Common myeloid progenitor, CD34-positive (primary cell): ENCODE measurements at regions of chr2 and their contacts with region 1.

Region 1: DNA sequence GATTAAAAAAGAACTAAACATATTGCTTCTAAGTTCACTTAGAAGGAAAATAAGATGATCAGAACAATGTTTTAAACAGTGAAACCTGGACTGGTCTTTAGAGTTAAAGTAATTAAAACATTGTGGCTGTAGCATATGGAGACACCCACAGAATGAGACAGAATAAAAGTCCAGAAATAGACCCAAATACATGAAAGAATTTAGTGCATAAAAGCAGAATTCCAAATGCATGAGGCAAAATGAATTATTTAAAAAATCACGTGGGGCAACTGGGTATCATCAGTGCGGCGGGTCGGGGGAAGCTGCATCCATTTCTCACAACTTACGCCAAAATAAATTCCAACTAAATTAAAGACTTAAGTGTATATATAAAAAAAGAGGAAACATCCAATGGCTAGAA is 12.1 kb downstream of the RNF149 start:
- DNase-seq: no peak
- H3K4me3 ChIP-seq: no peak overlapping the region
- H3K27ac ChIP-seq: no peak overlapping the region
- H3K4me1 ChIP-seq: peaks cover 0 to 6% (median under 1%) of the 10 kb centered on the region in 4 experiments
- H3K27me3 ChIP-seq: no peaks in the 10 kb centered on the region

Region 2: DNA sequence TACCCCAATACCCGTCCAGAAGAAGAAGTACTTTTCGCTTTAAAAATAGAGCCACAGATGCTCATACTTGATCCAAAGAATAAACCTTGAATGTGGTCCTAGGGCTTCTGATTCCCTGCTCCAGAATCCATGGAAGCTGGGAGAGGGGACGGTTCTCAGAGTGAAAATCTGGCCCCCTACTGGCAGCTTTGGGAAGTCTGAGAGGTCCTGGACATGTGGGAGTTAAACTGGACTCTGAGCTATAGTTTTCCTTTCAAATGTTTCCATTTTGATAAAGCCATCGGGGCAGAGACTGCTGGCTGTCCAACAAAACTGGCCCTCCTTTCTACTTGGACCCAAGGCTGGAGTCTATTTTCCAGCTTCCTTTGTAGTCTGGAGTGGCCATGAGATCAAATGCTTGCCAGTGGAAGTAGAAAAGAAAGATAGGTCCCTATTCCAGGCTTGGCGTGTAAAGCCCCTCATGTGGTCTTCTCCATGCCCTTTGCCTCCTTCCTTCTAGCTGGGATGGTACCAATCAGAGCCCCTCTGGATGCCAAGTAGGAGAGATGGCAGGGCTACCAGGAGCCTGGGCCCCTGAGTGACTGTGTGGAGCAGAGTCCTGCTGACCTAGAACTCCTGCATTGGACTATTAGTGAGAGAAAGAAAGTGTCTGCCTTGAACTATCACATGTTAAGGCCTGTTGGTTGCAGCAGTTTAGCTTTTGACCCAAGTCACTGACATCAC is 107.5 kb before region 1 on chr2:
- CTCF ChIA-PET with region 1: no interaction called
- POLR2A ChIA-PET with region 1: no interaction called
- DNase-seq: no peak
- H3K4me3 ChIP-seq: no peak overlapping the region
- H3K27ac ChIP-seq: no peak overlapping the region
- H3K4me1 ChIP-seq: peaks cover 0 to 6% (median 3%) of the 10 kb centered on the region in 4 experiments
- H3K27me3 ChIP-seq: no peaks in the 10 kb centered on the region

Region 3: DNA sequence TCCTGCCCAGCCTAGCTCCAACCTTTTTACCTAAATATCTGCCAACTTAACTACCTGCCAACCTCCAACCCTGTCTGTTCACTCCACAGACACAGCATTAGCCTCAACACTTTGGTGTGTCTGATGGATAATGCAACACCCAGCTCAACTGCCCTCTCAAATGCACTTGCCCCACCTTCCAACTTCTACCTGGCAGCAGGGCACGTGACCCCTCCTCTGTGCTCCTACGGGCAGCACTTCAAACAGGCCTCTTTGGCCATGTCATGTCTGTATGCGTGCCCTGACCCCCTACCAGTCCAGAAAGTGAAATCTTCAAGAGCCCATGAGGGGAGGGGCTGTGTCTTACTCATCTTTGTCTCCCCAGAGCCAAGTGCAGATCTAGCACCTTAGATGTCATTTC is 13.4 kb before region 1 on chr2:
- CTCF ChIA-PET with region 1: interaction called, 18 read pairs
- POLR2A ChIA-PET with region 1: no interaction called
- DNase-seq: no peak
- H3K4me3 ChIP-seq: no peak overlapping the region
- H3K27ac ChIP-seq: no peak overlapping the region
- H3K4me1 ChIP-seq: no peaks in the 10 kb centered on the region
- H3K27me3 ChIP-seq: no peaks in the 10 kb centered on the region

Region 4: GRCh38 chr2:101328474-101329007 is 32.2 kb after region 1 on chr2:
- CTCF ChIA-PET with region 1: no interaction called
- POLR2A ChIA-PET with region 1: no interaction called
- DNase-seq: peak; percentile 87 to 98 (median 96)
- H3K4me3 ChIP-seq: peak overlapping the region in 4 of 7 experiments; percentile 1 to 63 (median 36)
- H3K27ac ChIP-seq: peak overlapping the region; percentile 9 to 72
- H3K4me1 ChIP-seq: peaks cover 34 to 47% (median 37%) of the 10 kb centered on the region in 4 experiments
- H3K27me3 ChIP-seq: no peaks in the 10 kb centered on the region